ENCODE measurements at regions of chr7 and their contacts with region 1.

Region 1: GRCh38 chr7:71868797-71869196 is 543.3 kb downstream of the CALN1 start:
- DNase-seq: no peak
- ATAC-seq: no peak
- H3K4me3 ChIP-seq: no peak overlapping the region
- H3K27ac ChIP-seq: no peak overlapping the region
- H3K4me1 ChIP-seq: no peaks in the 10 kb centered on the region
- H3K27me3 ChIP-seq: no peaks in the 10 kb centered on the region
- CTCF ChIP-seq: no peak
- POLR2A ChIP-seq: no peak
- RAD21 ChIP-seq: no peak

Region 2: DNA sequence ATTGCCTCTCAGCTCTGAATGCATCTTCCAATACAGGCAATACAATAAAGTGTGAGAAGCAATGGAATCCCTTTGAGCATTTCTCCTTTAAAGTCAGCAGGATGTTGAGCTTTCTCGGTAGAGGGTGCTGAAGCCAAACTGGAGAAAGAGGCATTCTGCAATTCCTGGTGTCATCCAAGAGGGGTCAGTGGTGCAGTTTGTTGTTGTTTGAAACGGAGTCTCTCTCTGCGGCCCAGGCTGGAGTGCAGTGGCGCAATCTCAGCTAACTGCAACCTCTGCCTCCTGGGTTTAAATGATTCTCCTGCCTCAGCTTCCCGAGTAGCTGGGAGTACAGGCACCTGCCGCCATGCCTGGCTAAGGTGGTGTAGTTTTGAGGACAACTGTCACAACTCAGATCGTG is 56.9 kb after region 1 on chr7:
- CTCF ChIA-PET with region 1: no interaction called
- POLR2A ChIA-PET with region 1: no interaction called
- dilution Hi-C with region 1: no loop called
- in situ Hi-C with region 1: no loop called
- intact Hi-C with region 1: loop called (anchors 10 kb)
- DNase-seq: no peak
- ATAC-seq: no peak
- H3K4me3 ChIP-seq: no peak overlapping the region
- H3K27ac ChIP-seq: no peak overlapping the region
- H3K4me1 ChIP-seq: no peaks in the 10 kb centered on the region
- H3K27me3 ChIP-seq: no peaks in the 10 kb centered on the region
- CTCF ChIP-seq: no peak
- POLR2A ChIP-seq: no peak
- RAD21 ChIP-seq: no peak

Region 3: DNA sequence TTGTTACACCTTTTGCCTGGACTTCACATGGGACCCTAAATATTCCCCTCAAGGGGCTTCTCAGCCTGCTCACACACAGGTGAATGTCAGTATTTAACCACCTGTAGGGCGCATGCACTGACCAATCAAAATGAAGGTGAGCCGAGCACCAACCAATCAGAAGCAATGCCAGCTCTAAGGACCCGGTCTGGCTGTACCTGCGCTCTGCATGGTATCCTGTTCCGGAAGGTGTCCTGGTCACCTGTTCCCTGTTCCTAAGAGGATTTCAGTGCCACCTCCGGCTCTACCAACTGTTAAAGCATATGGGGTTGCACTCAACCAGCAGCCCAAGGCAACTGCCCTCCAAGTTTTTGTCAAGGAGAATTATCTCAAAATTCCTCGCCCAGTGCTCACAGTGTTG is 561.7 kb after region 1 on chr7:
- CTCF ChIA-PET with region 1: no interaction called
- POLR2A ChIA-PET with region 1: no interaction called
- dilution Hi-C with region 1: no loop called
- in situ Hi-C with region 1: no loop called
- intact Hi-C with region 1: no loop called
- DNase-seq: no peak
- ATAC-seq: no peak
- H3K4me3 ChIP-seq: no peak overlapping the region
- H3K27ac ChIP-seq: no peak overlapping the region
- H3K4me1 ChIP-seq: no peaks in the 10 kb centered on the region
- H3K27me3 ChIP-seq: no peaks in the 10 kb centered on the region
- CTCF ChIP-seq: no peak
- POLR2A ChIP-seq: no peak
- RAD21 ChIP-seq: no peak

Measured in IMR-90 (cell line).